ENCODE measurements at regions of chr9 and their contacts with region 1.

Region 1: GRCh38 chr9:36141288-36141687 is 4.8 kb downstream of the GLIPR2 start:
- DNase-seq: no peak
- ATAC-seq: no peak
- H3K4me3 ChIP-seq: peak overlapping the region in 1 of 12 donors; percentile 5
- H3K27ac ChIP-seq: peak overlapping the region in 3 of 12 donors; percentile 3 to 96 (median 89)
- H3K4me1 ChIP-seq: peaks cover 0 to 94% (median 26%) of the 10 kb centered on the region in 12 donors
- H3K27me3 ChIP-seq: peaks cover 0 to 16% (median 0%) of the 10 kb centered on the region in 9 donors
- CTCF ChIP-seq: peak in 6 of 12 donors; percentile 10 to 27 (median 17)
- POLR2A ChIP-seq: no peak

Region 2: GRCh38 chr9:36036780-36037548 is 104.3 kb before region 1 on chr9 and contains the start of gene RECK:
- intact Hi-C with region 1: no loop called
- DNase-seq: peak; percentile 91 to 95 (median 92)
- ATAC-seq: peak; percentile 83 to 97 (median 94)
- H3K4me3 ChIP-seq: peak within 1 kb of the TSS; percentile 81 to 100 (median 93)
- H3K27ac ChIP-seq: peak within 1 kb of the TSS; percentile 38 to 88 (median 78)
- H3K4me1 ChIP-seq: peaks cover 0 to 50% (median 28%) of the 10 kb centered on the region in 12 donors
- H3K27me3 ChIP-seq: no peaks in the 10 kb centered on the region
- CTCF ChIP-seq: no peak
- POLR2A ChIP-seq: peak in 1 of 2 donors; percentile 70
- total RNA-seq, gene RECK: 3.1 to 10.2 (median 4.9) TPM

Region 3: GRCh38 chr9:36190388-36191287 is 49.4 kb after region 1 on chr9 and contains the start of gene CLTA:
- intact Hi-C with region 1: loop called in 1 of 10 experiments (anchors 2 kb)
- DNase-seq: peak; percentile 95 to 98 (median 98)
- ATAC-seq: peak; percentile 98 to 100 (median 99)
- H3K4me3 ChIP-seq: peak within 1 kb of the TSS; percentile 69 to 99 (median 88)
- H3K27ac ChIP-seq: peak within 1 kb of the TSS; percentile 66 to 97 (median 92)
- H3K4me1 ChIP-seq: peaks cover 16 to 45% (median 40%) of the 10 kb centered on the region in 12 donors
- H3K27me3 ChIP-seq: no peaks in the 10 kb centered on the region
- CTCF ChIP-seq: peak; percentile 12 to 70 (median 57)
- POLR2A ChIP-seq: peak; percentile 62 to 92
- total RNA-seq, gene CLTA: 43.8 to 123 (median 61.8) TPM